CD14-positive monocyte (primary cell): ENCODE measurements at regions of chr22 and their contacts with region 1.

Region 1: GRCh38 chr22:22884010-22884887 is 3.4 kb upstream of the IGLL5 start:
- DNase-seq: peak; percentile 82 to 83 (median 82)
- H3K4me3 ChIP-seq: no peak overlapping the region
- H3K4me3 Mint-ChIP-seq: no peak overlapping the region
- H3K27ac ChIP-seq: no peak overlapping the region
- H3K27ac Mint-ChIP-seq: peak overlapping the region in 4 of 7 donors; percentile 22 to 70 (median 44)
- H3K4me1 ChIP-seq: peaks cover 33 to 35% of the 10 kb centered on the region in 2 donors
- H3K4me1 Mint-ChIP-seq: peaks cover 34% of the 10 kb centered on the region
- H3K27me3 ChIP-seq: no peaks in the 10 kb centered on the region
- H3K27me3 Mint-ChIP-seq: peaks cover 6 to 10% (median 10%) of the 10 kb centered on the region in 3 donors
- CTCF ChIP-seq: peak; percentile 84

Region 2: GRCh38 chr22:22787786-22788459 is 96.3 kb before region 1 on chr22:
- intact Hi-C with region 1: no loop called
- DNase-seq: peak; percentile 45 to 63 (median 45)
- H3K4me3 ChIP-seq: no peak overlapping the region
- H3K4me3 Mint-ChIP-seq: no peak overlapping the region
- H3K27ac ChIP-seq: no peak overlapping the region
- H3K27ac Mint-ChIP-seq: no peak overlapping the region
- H3K4me1 ChIP-seq: no peaks in the 10 kb centered on the region
- H3K4me1 Mint-ChIP-seq: no peaks in the 10 kb centered on the region
- H3K27me3 ChIP-seq: no peaks in the 10 kb centered on the region
- H3K27me3 Mint-ChIP-seq: peaks cover 5 to 7% (median 6%) of the 10 kb centered on the region in 3 donors
- CTCF ChIP-seq: peak; percentile 96

Region 3: GRCh38 chr22:22810018-22810427 is 74.2 kb before region 1 on chr22:
- intact Hi-C with region 1: loop called in 1 of 2 experiments (anchors 5 kb)
- DNase-seq: peak; percentile 31 to 73 (median 41)
- H3K4me3 ChIP-seq: no peak overlapping the region
- H3K4me3 Mint-ChIP-seq: no peak overlapping the region
- H3K27ac ChIP-seq: no peak overlapping the region
- H3K27ac Mint-ChIP-seq: no peak overlapping the region
- H3K4me1 ChIP-seq: peaks cover 27 to 33% of the 10 kb centered on the region in 2 donors
- H3K4me1 Mint-ChIP-seq: peaks cover 36% of the 10 kb centered on the region
- H3K27me3 ChIP-seq: no peaks in the 10 kb centered on the region
- H3K27me3 Mint-ChIP-seq: peaks cover 0 to 3% (median 0%) of the 10 kb centered on the region in 3 donors
- CTCF ChIP-seq: peak; percentile 99

Region 4: DNA sequence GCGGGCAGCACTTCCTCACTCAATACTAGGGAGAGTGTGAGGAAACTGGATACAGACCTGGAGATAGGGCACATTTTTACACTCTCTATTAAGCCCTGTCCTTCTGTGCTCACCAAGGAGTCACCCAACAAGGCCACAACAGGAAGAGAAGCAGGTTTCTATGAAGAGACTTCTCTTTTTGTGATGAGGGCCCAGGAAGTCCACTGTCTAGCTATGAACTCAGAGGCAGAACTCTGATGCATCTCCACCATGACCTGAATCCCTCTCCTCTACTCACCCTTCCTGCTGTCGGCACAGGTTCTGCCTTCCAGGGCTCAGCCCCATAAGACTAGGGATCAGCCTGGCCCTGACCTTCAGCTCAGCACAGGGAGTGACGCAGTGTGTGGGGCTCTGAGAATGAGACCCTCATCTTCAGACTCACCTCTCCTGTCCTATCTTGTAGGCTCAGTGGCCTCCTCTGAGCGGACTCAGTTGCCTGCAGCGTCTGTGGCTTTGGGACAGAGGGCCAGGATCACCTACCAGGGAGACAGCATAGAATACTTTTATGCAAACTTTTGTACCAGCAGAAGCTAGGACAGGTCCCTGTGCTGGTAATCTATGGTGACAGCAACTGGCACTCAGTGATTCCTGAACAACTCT is 46.0 kb before region 1 on chr22:
- intact Hi-C with region 1: no loop called
- DNase-seq: peak; percentile 70 to 84 (median 71)
- H3K4me3 ChIP-seq: no peak overlapping the region
- H3K4me3 Mint-ChIP-seq: no peak overlapping the region
- H3K27ac ChIP-seq: peak overlapping the region; percentile 49 to 64
- H3K27ac Mint-ChIP-seq: peak overlapping the region; percentile 72 to 88 (median 82)
- H3K4me1 ChIP-seq: peaks cover 33 to 39% of the 10 kb centered on the region in 2 donors
- H3K4me1 Mint-ChIP-seq: peaks cover 39% of the 10 kb centered on the region
- H3K27me3 ChIP-seq: no peaks in the 10 kb centered on the region
- H3K27me3 Mint-ChIP-seq: no peaks in the 10 kb centered on the region
- CTCF ChIP-seq: no peak

Region 5: DNA sequence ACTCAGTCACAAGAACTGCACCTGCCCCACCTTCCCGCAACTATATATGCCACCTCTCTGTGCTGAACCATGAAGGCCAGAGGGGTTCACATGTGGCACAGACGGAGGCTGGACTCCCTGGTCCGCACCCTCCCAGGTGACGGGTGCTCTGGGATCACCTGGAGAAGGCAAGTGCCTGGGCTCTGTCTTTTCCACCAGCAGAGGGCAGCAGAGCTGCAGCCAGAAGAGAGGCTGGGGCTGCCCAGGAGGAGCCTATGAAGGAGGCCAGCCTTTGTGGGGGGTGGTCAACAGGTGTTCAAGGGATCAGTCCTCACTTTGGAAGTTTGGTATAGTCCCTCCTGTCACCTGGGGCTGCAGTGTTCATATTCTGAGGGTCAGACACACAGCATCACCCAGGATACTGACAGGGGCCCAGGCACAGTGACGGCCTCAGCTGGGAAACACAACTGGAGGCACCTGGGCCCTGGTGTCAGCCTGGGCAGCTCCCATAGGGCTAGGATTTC is 35.8 kb before region 1 on chr22:
- intact Hi-C with region 1: loop called (anchors 5 kb)
- DNase-seq: peak; percentile 50 to 68 (median 63)
- H3K4me3 ChIP-seq: no peak overlapping the region
- H3K4me3 Mint-ChIP-seq: no peak overlapping the region
- H3K27ac ChIP-seq: no peak overlapping the region
- H3K27ac Mint-ChIP-seq: no peak overlapping the region
- H3K4me1 ChIP-seq: no peaks in the 10 kb centered on the region
- H3K4me1 Mint-ChIP-seq: peaks cover 9% of the 10 kb centered on the region
- H3K27me3 ChIP-seq: no peaks in the 10 kb centered on the region
- H3K27me3 Mint-ChIP-seq: peaks cover 0 to 4% (median 2%) of the 10 kb centered on the region in 3 donors
- CTCF ChIP-seq: peak; percentile 98

Region 6: GRCh38 chr22:22928666-22929380 is 44.6 kb after region 1 on chr22:
- intact Hi-C with region 1: loop called in 1 of 2 experiments (anchors 5 kb)
- DNase-seq: peak; percentile 100
- H3K4me3 ChIP-seq: peak overlapping the region in 1 of 3 experiments; percentile 35
- H3K4me3 Mint-ChIP-seq: peak overlapping the region in 1 of 2 donors; percentile 67
- H3K27ac ChIP-seq: peak overlapping the region; percentile 93 to 99
- H3K27ac Mint-ChIP-seq: peak overlapping the region; percentile 97 to 100 (median 99)
- H3K4me1 ChIP-seq: peaks cover 70 to 87% of the 10 kb centered on the region in 2 donors
- H3K4me1 Mint-ChIP-seq: peaks cover 71% of the 10 kb centered on the region
- H3K27me3 ChIP-seq: no peaks in the 10 kb centered on the region
- H3K27me3 Mint-ChIP-seq: peaks cover 0 to 2% (median 1%) of the 10 kb centered on the region in 3 donors
- CTCF ChIP-seq: no peak

Region 7: GRCh38 chr22:22948651-22949571 is 64.7 kb after region 1 on chr22:
- intact Hi-C with region 1: loop called in 1 of 2 experiments (anchors 5 kb)
- DNase-seq: peak in 2 of 3 donors; percentile 21 to 41
- H3K4me3 ChIP-seq: no peak overlapping the region
- H3K4me3 Mint-ChIP-seq: no peak overlapping the region
- H3K27ac ChIP-seq: no peak overlapping the region
- H3K27ac Mint-ChIP-seq: peak overlapping the region in 2 of 7 donors; percentile 94 to 99
- H3K4me1 ChIP-seq: peaks cover 67 to 75% of the 10 kb centered on the region in 2 donors
- H3K4me1 Mint-ChIP-seq: peaks cover 66% of the 10 kb centered on the region
- H3K27me3 ChIP-seq: no peaks in the 10 kb centered on the region
- H3K27me3 Mint-ChIP-seq: peaks cover 0 to 3% (median 2%) of the 10 kb centered on the region in 3 donors
- CTCF ChIP-seq: no peak